ENCODE measurements at regions of chr10 and their contacts with region 1.

Region 1: GRCh38 chr10:125866421-125867029 is 14.6 kb downstream of the DHX32 start:
- DNase-seq: no peak
- H3K4me3 ChIP-seq: no peak overlapping the region
- H3K27ac ChIP-seq: no peak overlapping the region
- H3K4me1 ChIP-seq: no peaks in the 10 kb centered on the region
- H3K27me3 ChIP-seq: no peaks in the 10 kb centered on the region
- CTCF ChIP-seq: no peak
- EP300 ChIP-seq: no peak
- POLR2A ChIP-seq: no peak

Region 2: GRCh38 chr10:125849448-125849847 is 17.1 kb before region 1 on chr10:
- intact Hi-C with region 1: loop called (anchors 1 kb)
- DNase-seq: no peak
- H3K4me3 ChIP-seq: no peak overlapping the region
- H3K27ac ChIP-seq: no peak overlapping the region
- H3K4me1 ChIP-seq: peaks cover 0 to 6% (median 3%) of the 10 kb centered on the region in 4 donors
- H3K27me3 ChIP-seq: no peaks in the 10 kb centered on the region
- CTCF ChIP-seq: no peak
- EP300 ChIP-seq: no peak
- POLR2A ChIP-seq: no peak